ENCODE measurements at regions of chr18 and their contacts with region 1.

Region 1: DNA sequence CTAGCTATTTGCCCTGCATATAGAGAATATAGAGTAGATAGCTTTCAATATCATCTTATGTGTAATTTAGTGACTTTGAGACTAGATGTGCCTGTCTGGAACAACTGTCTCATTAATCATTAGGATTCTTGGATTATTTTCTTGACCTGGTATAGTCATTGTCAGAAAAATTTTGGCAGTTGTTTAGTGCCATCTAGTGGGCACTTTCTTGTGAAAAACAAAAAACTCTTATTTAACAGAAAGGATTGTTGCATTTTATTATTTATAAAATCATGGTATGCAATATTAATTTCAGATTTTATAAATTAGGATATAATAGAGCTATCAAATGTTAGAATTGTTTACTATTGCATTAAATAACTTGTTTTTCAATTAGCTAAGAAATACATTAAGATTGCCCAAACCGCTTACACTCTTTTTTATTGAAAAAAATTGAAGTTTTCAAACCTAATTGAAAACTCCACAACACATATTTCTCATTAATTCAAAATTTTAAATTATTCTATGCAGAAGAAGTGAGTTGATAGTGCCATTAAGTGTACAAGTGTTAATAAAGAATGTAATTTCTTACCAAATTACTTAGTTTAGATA is 80.3 kb downstream of the DYNAP start:
- DNase-seq: no peak
- ATAC-seq: no peak
- H3K4me3 Mint-ChIP-seq: no peak overlapping the region
- H3K27ac Mint-ChIP-seq: no peak overlapping the region
- H3K4me1 Mint-ChIP-seq: no peaks in the 10 kb centered on the region
- H3K27me3 Mint-ChIP-seq: no peaks in the 10 kb centered on the region
- CTCF ChIP-seq: peak; percentile 71

Region 2: DNA sequence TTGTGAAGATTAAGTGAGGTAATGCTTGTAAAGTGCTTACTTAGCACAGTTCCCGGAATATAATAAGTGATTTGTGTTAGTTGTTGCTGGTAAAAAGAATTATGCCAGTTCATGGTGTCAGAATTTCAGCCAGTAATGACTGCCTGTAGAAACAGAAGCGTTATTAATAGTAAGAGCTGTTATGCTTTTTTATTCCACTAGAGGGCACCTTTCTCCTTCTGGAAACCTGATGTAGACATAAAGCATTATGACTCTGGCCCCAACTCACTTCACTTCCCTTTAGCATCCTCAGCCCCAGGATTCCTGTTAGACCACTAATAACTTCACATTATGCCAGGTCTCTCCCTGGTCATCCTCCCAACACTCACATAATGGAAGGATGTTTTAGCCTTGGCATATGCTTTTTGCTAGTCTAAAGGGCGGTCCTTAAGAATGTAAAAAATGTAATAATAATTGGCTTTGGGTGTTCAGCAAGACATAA is 278.8 kb before region 1 on chr18:
- CTCF ChIA-PET with region 1: interaction called, 24 read pairs
- POLR2A ChIA-PET with region 1: no interaction called
- intact Hi-C with region 1: loop called (anchors 5 kb)
- DNase-seq: no peak
- ATAC-seq: peak; percentile 64
- H3K4me3 Mint-ChIP-seq: no peak overlapping the region
- H3K27ac Mint-ChIP-seq: no peak overlapping the region
- H3K4me1 Mint-ChIP-seq: peaks cover 9% of the 10 kb centered on the region
- H3K27me3 Mint-ChIP-seq: peaks cover 12% of the 10 kb centered on the region
- CTCF ChIP-seq: peak; percentile 81

Region 3: GRCh38 chr18:54444319-54444914 is 227.0 kb before region 1 on chr18:
- CTCF ChIA-PET with region 1: interaction called, 30 read pairs
- POLR2A ChIA-PET with region 1: no interaction called
- intact Hi-C with region 1: loop called (anchors 5 kb)
- DNase-seq: peak; percentile 61
- ATAC-seq: peak; percentile 42
- H3K4me3 Mint-ChIP-seq: no peak overlapping the region
- H3K27ac Mint-ChIP-seq: no peak overlapping the region
- H3K4me1 Mint-ChIP-seq: no peaks in the 10 kb centered on the region
- H3K27me3 Mint-ChIP-seq: peaks cover 15% of the 10 kb centered on the region
- CTCF ChIP-seq: peak; percentile 73

Region 4: GRCh38 chr18:54503131-54503894 is 168.1 kb before region 1 on chr18:
- CTCF ChIA-PET with region 1: no interaction called
- POLR2A ChIA-PET with region 1: no interaction called
- intact Hi-C with region 1: no loop called
- DNase-seq: no peak
- ATAC-seq: no peak
- H3K4me3 Mint-ChIP-seq: no peak overlapping the region
- H3K27ac Mint-ChIP-seq: no peak overlapping the region
- H3K4me1 Mint-ChIP-seq: no peaks in the 10 kb centered on the region
- H3K27me3 Mint-ChIP-seq: no peaks in the 10 kb centered on the region
- CTCF ChIP-seq: no peak

Region 5: GRCh38 chr18:54558609-54559585 is 112.5 kb before region 1 on chr18:
- CTCF ChIA-PET with region 1: interaction called, 11 read pairs
- POLR2A ChIA-PET with region 1: no interaction called
- intact Hi-C with region 1: no loop called
- DNase-seq: peak; percentile 4
- ATAC-seq: no peak
- H3K4me3 Mint-ChIP-seq: no peak overlapping the region
- H3K27ac Mint-ChIP-seq: no peak overlapping the region
- H3K4me1 Mint-ChIP-seq: no peaks in the 10 kb centered on the region
- H3K27me3 Mint-ChIP-seq: peaks cover 4% of the 10 kb centered on the region
- CTCF ChIP-seq: peak; percentile 83

Region 6: GRCh38 chr18:55069497-55069896 is 398.1 kb after region 1 on chr18:
- CTCF ChIA-PET with region 1: no interaction called
- POLR2A ChIA-PET with region 1: no interaction called
- intact Hi-C with region 1: no loop called
- DNase-seq: no peak
- ATAC-seq: no peak
- H3K4me3 Mint-ChIP-seq: no peak overlapping the region
- H3K27ac Mint-ChIP-seq: no peak overlapping the region
- H3K4me1 Mint-ChIP-seq: no peaks in the 10 kb centered on the region
- H3K27me3 Mint-ChIP-seq: no peaks in the 10 kb centered on the region
- CTCF ChIP-seq: no peak

Measured in activated CD8-positive, alpha-beta T cell treated with anti-CD3 and anti-CD28 coated beads for 36 hours (primary cell).